CD4-positive, alpha-beta memory T cell (primary cell): ENCODE measurements at regions of chr4 and their contacts with region 1.

Region 1: GRCh38 chr4:11623726-11624037 is 195.0 kb upstream of the HS3ST1 start:
- DNase-seq: no peak
- H3K4me3 ChIP-seq: no peak overlapping the region
- H3K4me3 Mint-ChIP-seq: no peak overlapping the region
- H3K27ac ChIP-seq: no peak overlapping the region
- H3K27ac Mint-ChIP-seq: no peak overlapping the region
- H3K4me1 ChIP-seq: no peaks in the 10 kb centered on the region
- H3K4me1 Mint-ChIP-seq: no peaks in the 10 kb centered on the region
- H3K27me3 ChIP-seq: no peaks in the 10 kb centered on the region
- H3K27me3 Mint-ChIP-seq: peaks cover 2 to 4% of the 10 kb centered on the region in 2 donors

Region 2: GRCh38 chr4:10582059-10582686 is 1041.5 kb before region 1 on chr4:
- CTCF ChIA-PET with region 1: no interaction called
- POLR2A ChIA-PET with region 1: no interaction called
- intact Hi-C with region 1: loop called (anchors 10 kb)
- DNase-seq: peak in 3 of 5 donors; percentile 4 to 11 (median 6)
- H3K4me3 ChIP-seq: no peak overlapping the region
- H3K4me3 Mint-ChIP-seq: no peak overlapping the region
- H3K27ac ChIP-seq: no peak overlapping the region
- H3K27ac Mint-ChIP-seq: no peak overlapping the region
- H3K4me1 ChIP-seq: peaks cover 6% of the 10 kb centered on the region
- H3K4me1 Mint-ChIP-seq: peaks cover 6 to 13% (median 9%) of the 10 kb centered on the region in 4 donors
- H3K27me3 ChIP-seq: no peaks in the 10 kb centered on the region
- H3K27me3 Mint-ChIP-seq: peaks cover 0 to 10% of the 10 kb centered on the region in 2 donors

Region 3: DNA sequence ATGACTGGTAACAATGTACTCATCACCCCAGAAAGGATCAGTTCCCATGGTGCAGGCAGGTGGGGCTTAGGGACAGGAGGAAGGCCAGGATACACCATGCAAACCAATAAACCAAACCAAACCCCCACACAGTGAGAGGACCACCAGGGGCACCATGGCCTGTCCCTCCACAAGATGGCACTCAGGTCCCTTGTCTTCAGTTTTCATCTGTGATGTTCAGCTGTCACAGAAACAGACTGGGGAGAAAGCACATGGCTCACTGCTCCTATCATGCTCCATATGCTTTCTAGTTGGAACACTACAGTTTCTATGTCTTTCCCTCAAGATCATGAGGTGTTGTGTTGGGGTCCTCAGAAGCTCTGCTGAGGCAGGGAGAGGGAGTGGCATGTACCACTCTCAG is 205.1 kb before region 1 on chr4:
- CTCF ChIA-PET with region 1: no interaction called
- POLR2A ChIA-PET with region 1: no interaction called
- intact Hi-C with region 1: loop called (anchors 10 kb)
- DNase-seq: no peak
- H3K4me3 ChIP-seq: no peak overlapping the region
- H3K4me3 Mint-ChIP-seq: no peak overlapping the region
- H3K27ac ChIP-seq: no peak overlapping the region
- H3K27ac Mint-ChIP-seq: no peak overlapping the region
- H3K4me1 ChIP-seq: no peaks in the 10 kb centered on the region
- H3K4me1 Mint-ChIP-seq: no peaks in the 10 kb centered on the region
- H3K27me3 ChIP-seq: no peaks in the 10 kb centered on the region
- H3K27me3 Mint-ChIP-seq: peaks cover 2 to 5% of the 10 kb centered on the region in 2 donors